AG04449 (cell line): ENCODE measurements at regions of chr7 and their contacts with region 1.

Region 1: GRCh38 chr7:134327896-134328295 is 11.2 kb upstream of the SLC35B4 start:
- DNase-seq: no peak
- H3K4me3 ChIP-seq: no peak overlapping the region
- CTCF ChIP-seq: peak; percentile 60

Region 2: DNA sequence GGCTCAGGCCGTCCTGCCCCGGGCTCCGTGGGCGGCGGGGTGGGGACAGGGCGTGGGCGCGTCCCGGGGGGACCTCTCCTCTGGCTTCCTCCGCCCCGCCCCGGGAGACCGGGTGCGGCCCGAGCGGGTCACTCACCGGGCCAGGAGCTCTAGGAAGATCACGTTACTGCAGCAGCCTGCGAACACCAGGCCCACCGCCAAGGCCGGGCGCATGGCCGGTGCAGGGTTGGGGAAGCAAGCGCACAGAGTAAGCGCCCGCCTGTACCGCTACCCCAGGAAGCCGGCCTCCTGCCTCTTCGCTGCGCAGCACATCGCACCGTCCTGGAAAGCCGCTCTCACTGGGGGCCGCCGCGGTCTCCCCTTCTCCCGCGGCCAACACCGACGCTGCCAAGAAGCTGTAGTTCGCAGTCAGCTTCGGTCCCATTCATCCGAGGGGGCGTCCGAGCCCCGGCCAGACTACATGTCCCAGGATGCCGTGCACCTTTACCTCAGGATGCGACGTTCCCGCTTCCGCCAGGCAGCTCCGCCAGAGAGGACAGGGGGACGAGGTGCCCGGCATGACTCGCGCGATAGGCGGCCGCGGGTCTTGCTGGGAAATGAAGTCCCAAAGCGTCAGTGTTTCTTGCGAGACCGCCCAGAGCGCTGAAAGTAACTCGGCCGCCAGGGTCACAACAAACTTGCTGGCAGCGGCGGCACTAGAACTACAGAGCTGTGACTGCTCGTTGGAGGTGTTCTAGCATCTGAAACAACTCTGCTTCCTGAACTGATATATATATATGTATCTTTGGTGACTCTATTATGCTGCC is 11.2 kb before region 1 on chr7 and contains the start of gene SLC35B4:
- CTCF ChIA-PET with region 1: interaction called, 13 read pairs
- POLR2A ChIA-PET with region 1: no interaction called
- DNase-seq: peak; percentile 84
- H3K4me3 ChIP-seq: peak within 1 kb of the TSS; percentile 81
- CTCF ChIP-seq: peak; percentile 27